HEK293 (cell line): ENCODE measurements at regions of chr3 and their contacts with region 1.

Region 1: DNA sequence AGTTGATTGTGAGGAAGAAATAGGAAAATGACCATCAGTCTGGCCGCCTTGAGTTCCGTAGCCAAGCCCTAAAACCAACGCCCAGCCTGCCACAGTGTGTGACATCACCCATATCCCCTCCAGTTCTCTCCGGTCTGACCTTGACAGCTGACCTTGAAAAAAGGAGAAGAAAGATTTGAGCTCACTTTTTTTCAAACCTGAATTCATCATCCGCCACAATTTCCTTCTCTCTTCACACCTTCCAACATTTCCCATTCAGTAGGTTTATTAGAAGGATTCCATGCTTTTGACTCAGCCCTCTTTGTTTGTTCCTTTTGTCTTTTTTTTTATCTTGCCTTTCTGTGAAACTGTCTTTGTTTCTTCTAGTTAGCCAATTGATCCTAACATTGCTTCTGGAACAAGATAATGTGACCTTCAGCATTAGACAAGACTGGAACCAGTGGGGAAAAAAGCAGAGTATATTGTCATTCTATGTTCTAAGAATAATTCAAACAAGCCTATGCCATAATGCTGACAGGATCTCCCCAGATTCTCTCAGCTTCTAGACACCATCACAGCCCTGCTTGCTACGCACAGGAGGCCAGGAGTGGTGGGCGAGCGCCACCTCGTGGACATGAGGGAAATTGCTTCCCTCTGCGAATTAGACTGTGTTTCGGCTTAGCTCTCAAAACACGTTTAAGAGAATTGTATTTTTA is 283.1 kb downstream of the FGF12 start:
- H3K4me3 ChIP-seq: no peak overlapping the region
- H3K27ac ChIP-seq: no peak overlapping the region
- H3K4me1 ChIP-seq: no peaks in the 10 kb centered on the region
- CTCF ChIP-seq: peak; percentile 55; the same call in 1 of the 2 replicates

Region 2: GRCh38 chr3:192423003-192423349 is 21.3 kb before region 1 on chr3:
- CTCF ChIA-PET with region 1: interaction called, 13 read pairs
- POLR2A ChIA-PET with region 1: no interaction called
- H3K4me3 ChIP-seq: no peak overlapping the region
- H3K27ac ChIP-seq: no peak overlapping the region
- H3K4me1 ChIP-seq: no peaks in the 10 kb centered on the region
- CTCF ChIP-seq: no peak

Region 3: GRCh38 chr3:192433704-192434103 is 10.5 kb before region 1 on chr3:
- CTCF ChIA-PET with region 1: interaction called, 14 read pairs
- POLR2A ChIA-PET with region 1: no interaction called
- H3K4me3 ChIP-seq: no peak overlapping the region
- H3K27ac ChIP-seq: no peak overlapping the region
- H3K4me1 ChIP-seq: no peaks in the 10 kb centered on the region
- CTCF ChIP-seq: no peak